ENCODE measurements at regions of chr4 and their contacts with region 1.

Region 1: DNA sequence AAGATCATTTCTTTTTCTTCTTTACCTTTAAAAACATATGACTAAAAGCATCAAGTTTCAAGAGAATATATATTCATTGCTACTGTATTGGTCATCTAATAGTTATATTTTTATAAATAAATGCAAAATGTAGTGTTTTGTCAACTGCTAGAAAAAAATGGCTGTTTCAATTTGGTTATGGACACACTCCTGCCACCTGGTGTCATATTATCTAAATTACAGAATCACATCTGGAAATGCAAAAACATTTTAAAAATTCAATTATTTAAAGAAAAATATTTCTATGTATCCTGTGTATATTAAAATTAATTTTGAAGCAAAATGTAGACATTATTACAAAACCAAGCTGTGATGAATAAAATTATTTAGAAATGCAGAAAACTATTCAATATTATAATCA is 329.4 kb upstream of the PCDH18 start:
- DNase-seq: no peak
- ATAC-seq: no peak
- H3K4me3 ChIP-seq: no peak overlapping the region
- H3K27ac ChIP-seq: no peak overlapping the region
- H3K4me1 ChIP-seq: no peaks in the 10 kb centered on the region
- H3K27me3 ChIP-seq: no peaks in the 10 kb centered on the region
- CTCF ChIP-seq: peak in 2 of 3 experiments; percentile 20 to 33; a peak in 3 of 6 replicates
- EP300 ChIP-seq: no peak
- POLR2A ChIP-seq: no peak
- RAD21 ChIP-seq: peak; percentile 48

Region 2: DNA sequence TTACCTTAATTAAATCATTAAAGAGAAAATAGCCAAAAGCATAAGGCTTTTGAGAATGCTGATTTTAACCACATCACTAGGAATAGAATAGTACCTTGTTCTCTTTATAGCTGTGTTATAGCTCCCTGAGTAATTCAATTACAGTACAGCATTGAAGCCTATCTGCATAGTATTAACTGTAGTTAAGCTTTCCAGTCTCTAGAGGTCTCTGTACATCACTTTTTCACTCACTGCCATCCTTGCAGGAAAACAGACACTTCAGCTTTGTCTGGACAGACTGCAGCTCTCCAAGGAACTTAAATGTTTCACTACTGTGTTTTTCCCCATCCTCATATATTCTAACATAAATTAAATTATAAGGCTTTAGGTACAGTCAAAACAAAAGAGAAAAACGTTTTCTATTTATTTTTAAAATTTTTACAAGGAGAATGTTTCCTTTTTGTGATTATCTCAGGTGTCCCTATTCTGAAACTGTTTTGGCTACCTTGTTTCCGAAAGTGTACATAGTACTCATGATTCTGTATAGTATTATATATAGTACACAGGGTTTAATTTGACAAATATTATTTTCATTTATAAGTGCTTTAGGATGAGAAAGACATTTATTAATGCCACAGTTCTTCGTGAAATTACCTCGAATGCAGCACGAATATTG is 737.3 kb before region 1 on chr4:
- CTCF ChIA-PET with region 1: interaction called, 10 read pairs
- POLR2A ChIA-PET with region 1: no interaction called
- RAD21 ChIA-PET with region 1: interaction called, 4 read pairs
- SMC1A ChIA-PET with region 1: no interaction called
- in situ Hi-C with region 1: no loop called
- intact Hi-C with region 1: loop called (anchors 1 kb)
- DNase-seq: peak; percentile 1
- ATAC-seq: peak; percentile 96
- H3K4me3 ChIP-seq: no peak overlapping the region
- H3K27ac ChIP-seq: no peak overlapping the region
- H3K4me1 ChIP-seq: no peaks in the 10 kb centered on the region
- H3K27me3 ChIP-seq: no peaks in the 10 kb centered on the region
- CTCF ChIP-seq: peak; percentile 42 to 64 (median 43); a peak in 5 of 6 replicates
- EP300 ChIP-seq: no peak
- POLR2A ChIP-seq: no peak
- RAD21 ChIP-seq: peak; percentile 63

Region 3: GRCh38 chr4:137735561-137736104 is 126.0 kb before region 1 on chr4:
- CTCF ChIA-PET with region 1: no interaction called
- POLR2A ChIA-PET with region 1: no interaction called
- RAD21 ChIA-PET with region 1: no interaction called
- SMC1A ChIA-PET with region 1: no interaction called
- in situ Hi-C with region 1: no loop called
- intact Hi-C with region 1: loop called (anchors 5 kb)
- DNase-seq: no peak
- ATAC-seq: peak; percentile 75
- H3K4me3 ChIP-seq: no peak overlapping the region
- H3K27ac ChIP-seq: no peak overlapping the region
- H3K4me1 ChIP-seq: no peaks in the 10 kb centered on the region
- H3K27me3 ChIP-seq: no peaks in the 10 kb centered on the region
- CTCF ChIP-seq: peak in 1 of 3 experiments; percentile 23; a peak in 1 of 6 replicates
- EP300 ChIP-seq: no peak
- POLR2A ChIP-seq: no peak
- RAD21 ChIP-seq: no peak

Region 4: GRCh38 chr4:137819964-137820383 is 41.7 kb before region 1 on chr4:
- CTCF ChIA-PET with region 1: interaction called, 8 read pairs
- POLR2A ChIA-PET with region 1: interaction called, 4 read pairs
- RAD21 ChIA-PET with region 1: interaction called, 3 read pairs
- SMC1A ChIA-PET with region 1: no interaction called
- in situ Hi-C with region 1: no loop called
- intact Hi-C with region 1: loop called (anchors 1 kb)
- DNase-seq: peak; percentile 1
- ATAC-seq: peak; percentile 97
- H3K4me3 ChIP-seq: no peak overlapping the region
- H3K27ac ChIP-seq: no peak overlapping the region
- H3K4me1 ChIP-seq: no peaks in the 10 kb centered on the region
- H3K27me3 ChIP-seq: no peaks in the 10 kb centered on the region
- CTCF ChIP-seq: peak; percentile 62 to 77 (median 66)
- EP300 ChIP-seq: no peak
- POLR2A ChIP-seq: no peak
- RAD21 ChIP-seq: peak; percentile 89

Region 5: DNA sequence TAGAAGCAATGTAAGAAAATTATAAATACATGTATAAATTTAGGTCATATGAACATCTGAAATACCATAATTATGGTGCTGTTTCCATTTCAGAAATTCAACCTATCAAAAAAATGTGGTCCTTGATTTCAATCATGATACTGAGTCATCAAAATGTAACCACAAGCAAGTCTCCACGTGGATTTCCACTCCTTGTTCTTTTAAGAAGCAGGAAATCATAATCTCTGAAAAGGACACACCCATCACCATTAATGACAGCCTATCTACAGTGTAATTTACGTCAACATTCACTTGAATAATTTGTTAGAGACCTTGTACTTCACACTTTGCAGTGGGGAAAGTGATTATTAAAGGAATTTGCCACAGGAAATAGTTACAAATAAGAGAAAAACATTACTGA is 398.1 kb after region 1 on chr4:
- CTCF ChIA-PET with region 1: no interaction called
- POLR2A ChIA-PET with region 1: no interaction called
- RAD21 ChIA-PET with region 1: no interaction called
- SMC1A ChIA-PET with region 1: no interaction called
- in situ Hi-C with region 1: no loop called
- intact Hi-C with region 1: no loop called
- DNase-seq: no peak
- ATAC-seq: no peak
- H3K4me3 ChIP-seq: no peak overlapping the region
- H3K27ac ChIP-seq: no peak overlapping the region
- H3K4me1 ChIP-seq: no peaks in the 10 kb centered on the region
- H3K27me3 ChIP-seq: no peaks in the 10 kb centered on the region; a peak in 1 of 4 replicates
- CTCF ChIP-seq: no peak
- EP300 ChIP-seq: no peak
- POLR2A ChIP-seq: no peak
- RAD21 ChIP-seq: no peak